Cardiac septum (tissue), 1 donor: ENCODE measurements at regions of chr12 and their contacts with region 1.

Region 1: DNA sequence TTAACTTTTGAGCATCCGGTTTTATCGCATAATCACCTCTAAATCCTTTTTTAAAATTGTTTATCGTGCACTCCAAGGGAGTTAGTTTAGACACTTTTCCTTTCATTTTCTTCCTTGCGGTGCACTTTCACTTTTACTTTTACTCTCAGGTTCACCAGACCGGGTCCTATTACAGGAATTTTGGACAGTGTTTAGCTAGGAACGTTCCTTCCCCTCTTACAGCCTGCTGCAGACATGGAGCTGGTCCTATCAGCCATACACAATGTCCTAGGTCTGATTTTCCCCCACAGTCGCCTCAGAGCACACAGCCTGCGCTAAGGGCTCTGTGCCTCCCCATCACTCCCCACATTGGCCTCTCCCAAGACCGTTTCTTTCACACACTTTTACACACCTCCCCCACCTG is 103.9 kb downstream of the ALG10 start:
- DNase-seq: no peak

Region 2: GRCh38 chr12:33290703-33291102 is 835.5 kb before region 1 on chr12:
- intact Hi-C with region 1: no loop called
- DNase-seq: no peak

Region 3: GRCh38 chr12:33765614-33766013 is 360.6 kb before region 1 on chr12:
- intact Hi-C with region 1: no loop called
- DNase-seq: no peak

Region 4: DNA sequence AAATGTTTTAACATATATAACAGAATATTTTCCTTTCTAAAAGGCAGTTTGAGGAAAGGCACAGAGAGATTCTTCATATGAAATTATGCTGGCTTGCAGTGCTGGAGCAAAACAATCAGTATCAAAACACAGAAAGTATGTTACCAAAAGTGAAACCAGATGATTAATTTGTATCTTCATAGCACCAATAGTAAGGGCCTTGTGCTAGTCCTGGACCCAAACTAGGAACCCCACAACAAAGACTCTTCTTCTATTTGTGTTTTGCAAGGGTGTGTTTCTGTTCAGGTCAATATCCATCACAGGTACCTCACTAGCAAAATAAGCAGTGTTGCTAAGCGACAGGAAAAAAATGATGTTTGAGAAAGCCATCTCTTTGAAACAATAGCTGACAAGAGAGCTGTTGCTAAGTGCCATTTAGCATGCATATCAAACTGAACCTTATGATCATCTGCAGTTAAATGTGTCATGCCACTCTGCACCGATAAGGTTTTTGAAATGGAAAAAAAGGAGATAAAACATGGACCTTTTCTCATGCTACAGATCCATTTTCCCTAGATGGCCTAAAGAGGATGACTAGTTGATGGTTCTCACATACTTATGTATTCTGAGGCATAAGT is 300.1 kb before region 1 on chr12:
- intact Hi-C with region 1: no loop called
- DNase-seq: no peak

Region 5: DNA sequence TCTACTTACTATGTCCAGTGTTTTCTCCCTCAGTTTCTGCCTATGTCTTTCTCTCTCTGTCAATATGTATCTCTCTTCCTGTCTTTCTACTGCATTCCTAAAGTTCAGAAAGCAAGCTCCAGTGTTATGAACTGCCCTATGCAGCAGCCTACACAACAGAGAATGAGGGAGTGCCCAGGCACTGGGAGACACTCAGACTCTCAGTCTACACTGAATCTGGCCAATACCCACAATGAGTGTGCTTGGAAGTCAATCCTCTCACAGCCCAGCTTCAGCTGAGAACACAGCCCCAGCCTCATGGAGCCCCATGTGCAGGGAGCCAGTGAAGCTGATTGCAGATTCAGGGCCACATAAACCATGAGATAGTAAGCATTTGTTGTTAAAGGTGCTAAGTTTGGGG is 24.8 kb after region 1 on chr12:
- intact Hi-C with region 1: loop called (anchors 2 kb)
- DNase-seq: no peak

Region 6: DNA sequence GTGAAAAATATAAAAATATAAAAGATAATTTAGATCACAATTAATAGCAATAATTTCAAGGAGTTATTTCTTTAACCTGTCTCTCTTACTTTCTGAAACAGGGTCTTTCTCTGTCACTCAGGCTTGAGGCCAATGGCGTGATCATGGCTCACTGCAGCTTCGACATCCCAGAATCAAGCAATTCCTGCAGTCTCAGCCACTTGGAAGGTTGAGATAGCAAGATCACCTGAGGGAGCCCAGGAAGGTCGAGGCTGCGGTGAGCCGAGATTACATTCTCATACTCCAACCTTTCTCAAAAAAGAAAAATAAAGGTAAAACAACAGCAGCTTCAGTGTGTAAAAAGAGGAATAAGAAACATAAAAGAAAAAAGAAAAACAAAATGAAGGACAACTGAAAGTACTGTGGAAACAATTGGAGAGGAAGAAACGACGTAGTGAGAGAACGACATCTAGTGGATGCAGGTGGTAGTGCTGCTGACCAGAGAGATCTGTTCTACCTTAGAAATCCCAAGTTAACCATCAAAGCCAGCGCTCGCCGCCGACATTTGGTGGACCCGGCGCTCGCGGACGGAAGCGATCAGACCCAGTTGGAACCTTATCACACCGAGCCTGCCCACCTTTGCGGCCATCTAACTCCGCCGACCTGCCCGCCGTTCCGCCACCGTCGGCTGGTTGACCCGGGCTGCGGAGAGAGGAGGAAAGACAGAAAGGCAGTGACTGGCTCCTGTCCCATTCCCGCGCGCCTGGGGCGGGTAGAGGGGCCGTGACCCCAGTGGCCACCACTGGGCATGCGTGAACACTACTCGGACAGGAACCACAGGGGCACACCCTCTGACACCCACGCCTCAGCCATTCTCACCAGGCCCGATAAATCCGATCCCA is 92.2 kb after region 1 on chr12:
- intact Hi-C with region 1: loop called (anchors 2 kb)
- DNase-seq: peak; percentile 76

Region 7: DNA sequence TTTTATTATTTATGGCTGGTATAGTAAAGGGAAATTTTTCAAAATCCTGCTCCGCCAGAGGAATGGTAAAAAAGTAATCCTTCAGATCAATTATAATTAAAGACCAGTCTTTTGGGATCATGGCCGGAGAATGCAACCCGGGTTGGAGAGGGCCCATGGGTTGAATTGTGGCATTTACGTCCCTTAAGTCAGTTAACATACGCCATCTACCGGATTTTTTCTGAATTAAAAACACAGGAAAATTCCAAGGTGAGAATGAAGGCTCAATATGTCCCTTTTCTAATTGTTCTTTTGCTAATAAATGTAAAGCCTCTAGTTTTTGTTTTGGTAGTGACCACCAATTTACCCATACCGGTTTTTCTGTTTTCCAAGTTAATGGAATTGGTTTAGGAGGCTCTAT is 498.9 kb after region 1 on chr12:
- intact Hi-C with region 1: loop called (anchors 5 kb)
- DNase-seq: no peak